ENCODE measurements at regions of chr12 and their contacts with region 1.

Region 1: DNA sequence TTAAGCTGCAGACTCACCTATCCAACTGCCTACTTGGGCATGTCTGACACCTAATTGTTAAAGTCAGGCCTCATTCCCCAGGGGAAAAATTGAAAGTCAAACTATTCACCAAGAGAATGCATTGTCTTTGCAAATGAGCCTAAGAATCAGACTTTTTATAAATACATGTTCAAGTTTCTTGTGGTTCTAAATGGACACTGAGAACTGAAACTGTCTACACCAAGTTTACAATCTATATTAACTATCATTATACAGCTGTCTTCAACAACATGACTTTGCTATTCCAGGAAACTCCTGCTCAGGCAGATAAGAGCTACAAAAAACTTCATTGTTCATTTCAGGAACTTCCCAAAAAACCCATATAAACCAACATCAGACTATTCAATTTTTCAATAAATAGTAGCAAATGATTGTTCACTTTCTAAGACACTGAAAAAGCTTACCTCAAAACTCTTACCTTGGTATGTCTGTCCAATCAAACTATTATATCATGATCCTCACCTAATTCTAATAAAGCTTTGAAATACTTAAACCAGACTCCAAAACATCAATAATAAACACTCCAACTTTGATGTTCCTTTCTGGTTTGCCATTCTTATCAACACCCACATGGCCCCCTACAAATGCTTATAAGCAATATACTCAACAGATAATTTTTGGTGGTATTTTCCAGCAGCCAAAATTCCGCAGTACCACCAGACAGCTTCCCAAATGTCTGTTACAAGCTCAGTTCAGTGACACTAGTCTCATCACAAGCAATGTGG is 24.2 kb downstream of the CDK17 start:
- DNase-seq: no peak
- H3K4me3 Mint-ChIP-seq: no peak overlapping the region
- H3K27ac Mint-ChIP-seq: peak overlapping the region; percentile 54
- H3K4me1 Mint-ChIP-seq: peaks cover 72% of the 10 kb centered on the region
- H3K27me3 Mint-ChIP-seq: no peaks in the 10 kb centered on the region

Region 2: DNA sequence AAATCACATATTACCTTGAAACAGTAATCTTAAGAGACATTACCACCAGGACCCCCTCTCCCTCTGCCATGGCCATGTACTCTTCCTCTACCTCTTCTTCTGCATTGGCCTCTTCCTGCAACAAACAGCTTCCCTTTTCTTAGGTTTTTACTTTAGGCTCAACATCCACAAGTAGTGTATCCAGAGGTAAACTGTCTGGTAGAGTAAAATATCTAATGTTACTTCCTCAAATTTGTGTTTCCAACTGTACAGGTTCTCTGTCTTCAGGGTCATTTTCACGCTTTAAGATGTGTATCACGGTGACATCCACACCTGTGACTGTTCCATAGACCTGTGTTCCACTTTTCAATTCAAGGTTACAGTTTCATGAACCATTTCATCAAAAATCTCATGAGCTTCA is 10.8 kb after region 1 on chr12:
- CTCF ChIA-PET with region 1: interaction called, 10 read pairs
- POLR2A ChIA-PET with region 1: no interaction called
- DNase-seq: no peak
- H3K4me3 Mint-ChIP-seq: no peak overlapping the region
- H3K27ac Mint-ChIP-seq: no peak overlapping the region
- H3K4me1 Mint-ChIP-seq: peaks cover 55% of the 10 kb centered on the region
- H3K27me3 Mint-ChIP-seq: no peaks in the 10 kb centered on the region

Region 3: GRCh38 chr12:96471368-96472050 is 95.5 kb after region 1 on chr12:
- CTCF ChIA-PET with region 1: no interaction called
- POLR2A ChIA-PET with region 1: no interaction called
- DNase-seq: no peak
- H3K4me3 Mint-ChIP-seq: no peak overlapping the region
- H3K27ac Mint-ChIP-seq: no peak overlapping the region
- H3K4me1 Mint-ChIP-seq: peaks cover 5% of the 10 kb centered on the region
- H3K27me3 Mint-ChIP-seq: no peaks in the 10 kb centered on the region

Measured in activated CD4-positive, alpha-beta T cell treated with anti-CD3 and anti-CD28 coated beads, Interleukin-2, amount 10 ng/mL, durations not matched to agents 7 days and 5 days (primary cell).